Posterior vena cava (tissue), 2 donors: ENCODE measurements at regions of chr4 and their contacts with region 1.

Region 1: DNA sequence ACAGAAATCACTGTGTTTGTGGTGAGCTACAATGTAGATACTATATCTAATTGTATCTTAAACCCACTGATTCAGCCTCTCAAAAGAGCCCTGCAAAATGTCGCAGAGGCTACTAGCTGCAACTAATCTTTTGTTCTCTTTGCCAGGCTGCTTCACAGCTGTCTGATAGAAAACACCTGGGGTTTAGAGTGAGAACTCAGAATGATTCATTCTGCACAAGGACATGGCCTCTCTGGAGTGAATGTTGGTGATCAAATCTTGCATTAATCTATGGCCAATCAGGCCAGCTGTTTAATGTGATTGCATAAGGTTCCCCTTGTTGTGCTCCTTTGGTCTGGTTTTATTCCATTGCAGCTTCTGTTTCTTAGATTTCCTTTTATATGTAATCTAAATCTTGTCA is 100.3 kb downstream of the EMCN start:
- DNase-seq: no peak

Region 2: GRCh38 chr4:100311171-100311570 is 106.4 kb before region 1 on chr4:
- intact Hi-C with region 1: loop called in 1 of 2 experiments (anchors 10 kb)
- DNase-seq: no peak

Region 3: DNA sequence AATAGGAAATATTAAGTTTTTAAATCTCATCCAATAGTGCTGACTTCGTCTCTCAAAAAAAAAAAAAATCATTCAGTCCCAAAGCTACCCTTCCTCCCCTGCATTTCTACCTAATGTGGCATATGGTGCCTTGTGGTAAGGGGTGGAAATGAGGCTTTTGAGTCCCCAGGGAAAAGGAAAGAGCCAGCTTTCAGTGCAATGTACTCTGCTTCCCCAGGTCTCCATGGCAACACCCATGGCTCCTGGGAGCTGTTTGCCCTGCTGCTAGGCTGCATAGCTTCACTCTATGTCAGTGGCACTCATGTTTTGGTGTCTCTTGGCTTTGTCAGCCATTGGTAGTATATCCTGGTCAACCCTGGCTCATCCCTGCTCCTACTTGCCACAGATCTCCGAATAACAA is 1751.8 kb after region 1 on chr4:
- intact Hi-C with region 1: no loop called
- DNase-seq: no peak